ENCODE measurements at regions of chr2 and their contacts with region 1.

Region 1: GRCh38 chr2:189287982-189288521 is 108.5 kb upstream of the COL5A2 start:
- DNase-seq: no peak
- H3K4me3 ChIP-seq: no peak overlapping the region
- H3K27ac ChIP-seq: peak overlapping the region; percentile 6
- H3K4me1 ChIP-seq: no peaks in the 10 kb centered on the region
- H3K27me3 ChIP-seq: no peaks in the 10 kb centered on the region
- CTCF ChIP-seq: peak; percentile 25

Region 2: DNA sequence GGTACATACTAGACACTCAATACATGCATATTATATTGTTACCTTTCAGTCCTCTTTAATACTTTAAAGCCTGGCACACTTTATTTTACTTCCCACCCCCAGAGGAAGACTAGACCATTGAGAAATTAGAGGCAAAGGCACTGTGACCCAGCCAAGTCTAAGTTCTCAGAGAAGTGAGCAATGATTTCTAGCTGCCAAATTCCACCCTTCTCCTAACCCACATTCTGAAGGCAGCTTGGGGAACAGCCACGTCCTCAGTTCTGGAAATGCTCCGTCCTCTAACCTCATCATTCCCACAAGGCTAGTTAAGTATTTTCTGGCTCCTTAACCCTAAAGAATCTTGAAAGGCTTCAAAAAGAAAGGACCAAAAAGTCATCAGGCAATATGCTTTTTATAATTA is 195.1 kb before region 1 on chr2:
- intact Hi-C with region 1: loop called (anchors 5 kb)
- DNase-seq: peak; percentile 22
- H3K4me3 ChIP-seq: no peak overlapping the region
- H3K27ac ChIP-seq: peak overlapping the region; percentile 13
- H3K4me1 ChIP-seq: no peaks in the 10 kb centered on the region
- H3K27me3 ChIP-seq: no peaks in the 10 kb centered on the region
- CTCF ChIP-seq: no peak

Region 3: GRCh38 chr2:189129971-189130370 is 158.1 kb before region 1 on chr2:
- intact Hi-C with region 1: no loop called
- DNase-seq: no peak
- H3K4me3 ChIP-seq: no peak overlapping the region
- H3K27ac ChIP-seq: no peak overlapping the region
- H3K4me1 ChIP-seq: no peaks in the 10 kb centered on the region
- H3K27me3 ChIP-seq: no peaks in the 10 kb centered on the region
- CTCF ChIP-seq: no peak

Region 4: DNA sequence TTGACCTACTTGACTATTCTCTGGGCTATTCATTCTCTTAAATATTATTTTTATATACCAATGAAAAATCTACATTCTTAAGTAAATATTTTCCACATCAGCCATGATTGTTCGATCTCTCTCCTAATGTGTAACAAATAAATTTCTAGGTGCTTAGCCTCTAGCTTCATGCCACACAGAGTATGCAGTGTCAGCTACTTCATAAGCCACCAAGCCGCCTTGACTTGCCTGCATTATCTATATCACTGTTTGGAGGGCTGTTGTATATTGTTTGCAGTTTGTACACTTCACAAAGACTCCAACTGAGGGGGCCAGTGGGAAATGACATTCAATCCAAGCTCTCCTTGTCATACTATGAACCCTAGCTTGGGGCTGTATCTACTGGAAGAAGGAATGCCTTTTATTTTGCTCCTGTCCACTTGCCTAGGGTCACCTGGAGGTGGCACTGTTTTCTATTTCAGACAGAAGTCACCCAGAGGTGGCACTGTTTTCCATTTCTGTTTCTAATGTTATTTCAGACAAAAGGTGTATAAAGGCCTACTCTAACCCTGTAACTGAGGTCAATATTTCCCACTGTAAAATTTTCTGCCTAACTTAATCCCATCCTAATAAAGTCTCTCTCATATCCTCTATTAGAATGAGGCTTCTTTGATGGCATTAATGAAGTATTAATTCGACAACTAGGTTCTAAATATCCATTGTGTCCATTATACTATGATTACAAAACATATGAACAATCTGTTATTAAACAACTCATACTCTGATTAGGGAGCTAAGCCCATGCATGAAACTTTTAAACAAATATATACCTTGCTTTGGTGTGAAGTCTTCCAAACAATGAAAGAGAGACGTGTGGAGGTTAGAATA is 144.9 kb before region 1 on chr2:
- intact Hi-C with region 1: loop called (anchors 5 kb)
- DNase-seq: peak; percentile 48
- H3K4me3 ChIP-seq: no peak overlapping the region
- H3K27ac ChIP-seq: no peak overlapping the region
- H3K4me1 ChIP-seq: no peaks in the 10 kb centered on the region
- H3K27me3 ChIP-seq: no peaks in the 10 kb centered on the region
- CTCF ChIP-seq: peak; percentile 75

Measured in colonic mucosa (tissue), 4 donors.